Caco-2 (cell line): ENCODE measurements at regions of chr17 and their contacts with region 1.

Region 1: GRCh38 chr17:64145757-64146417 is 15.9 kb upstream of the ERN1 start:
- DNase-seq: peak; percentile 97 to 99
- H3K4me3 ChIP-seq: peak overlapping the region; percentile 81
- H3K4me3 Mint-ChIP-seq: no peak overlapping the region
- H3K27ac Mint-ChIP-seq: no peak overlapping the region
- H3K4me1 ChIP-seq: no peaks in the 10 kb centered on the region
- H3K4me1 Mint-ChIP-seq: peaks cover 20% of the 10 kb centered on the region
- H3K27me3 ChIP-seq: no peaks in the 10 kb centered on the region
- H3K27me3 Mint-ChIP-seq: no peaks in the 10 kb centered on the region
- CTCF ChIP-seq: no peak

Region 2: GRCh38 chr17:63735691-63736090 is 410.2 kb before region 1 on chr17:
- CTCF ChIA-PET with region 1: no interaction called
- POLR2A ChIA-PET with region 1: interaction called, 17 read pairs
- intact Hi-C with region 1: no loop called
- DNase-seq: no peak
- H3K4me3 ChIP-seq: no peak overlapping the region
- H3K4me3 Mint-ChIP-seq: no peak overlapping the region
- H3K27ac Mint-ChIP-seq: no peak overlapping the region
- H3K4me1 ChIP-seq: peaks cover 5% of the 10 kb centered on the region; the same call in 1 of the 2 replicates
- H3K4me1 Mint-ChIP-seq: peaks cover 6% of the 10 kb centered on the region
- H3K27me3 ChIP-seq: no peaks in the 10 kb centered on the region
- H3K27me3 Mint-ChIP-seq: no peaks in the 10 kb centered on the region
- CTCF ChIP-seq: no peak

Region 3: GRCh38 chr17:64187093-64187895 is 41.4 kb after region 1 on chr17:
- CTCF ChIA-PET with region 1: no interaction called
- POLR2A ChIA-PET with region 1: no interaction called
- intact Hi-C with region 1: loop called (anchors 1 kb)
- DNase-seq: peak; percentile 77 to 81
- H3K4me3 ChIP-seq: no peak overlapping the region
- H3K4me3 Mint-ChIP-seq: peak overlapping the region; percentile 28
- H3K27ac Mint-ChIP-seq: peak overlapping the region; percentile 86
- H3K4me1 ChIP-seq: peaks cover 25% of the 10 kb centered on the region
- H3K4me1 Mint-ChIP-seq: peaks cover 21% of the 10 kb centered on the region
- H3K27me3 ChIP-seq: no peaks in the 10 kb centered on the region
- H3K27me3 Mint-ChIP-seq: no peaks in the 10 kb centered on the region
- CTCF ChIP-seq: no peak

Region 4: DNA sequence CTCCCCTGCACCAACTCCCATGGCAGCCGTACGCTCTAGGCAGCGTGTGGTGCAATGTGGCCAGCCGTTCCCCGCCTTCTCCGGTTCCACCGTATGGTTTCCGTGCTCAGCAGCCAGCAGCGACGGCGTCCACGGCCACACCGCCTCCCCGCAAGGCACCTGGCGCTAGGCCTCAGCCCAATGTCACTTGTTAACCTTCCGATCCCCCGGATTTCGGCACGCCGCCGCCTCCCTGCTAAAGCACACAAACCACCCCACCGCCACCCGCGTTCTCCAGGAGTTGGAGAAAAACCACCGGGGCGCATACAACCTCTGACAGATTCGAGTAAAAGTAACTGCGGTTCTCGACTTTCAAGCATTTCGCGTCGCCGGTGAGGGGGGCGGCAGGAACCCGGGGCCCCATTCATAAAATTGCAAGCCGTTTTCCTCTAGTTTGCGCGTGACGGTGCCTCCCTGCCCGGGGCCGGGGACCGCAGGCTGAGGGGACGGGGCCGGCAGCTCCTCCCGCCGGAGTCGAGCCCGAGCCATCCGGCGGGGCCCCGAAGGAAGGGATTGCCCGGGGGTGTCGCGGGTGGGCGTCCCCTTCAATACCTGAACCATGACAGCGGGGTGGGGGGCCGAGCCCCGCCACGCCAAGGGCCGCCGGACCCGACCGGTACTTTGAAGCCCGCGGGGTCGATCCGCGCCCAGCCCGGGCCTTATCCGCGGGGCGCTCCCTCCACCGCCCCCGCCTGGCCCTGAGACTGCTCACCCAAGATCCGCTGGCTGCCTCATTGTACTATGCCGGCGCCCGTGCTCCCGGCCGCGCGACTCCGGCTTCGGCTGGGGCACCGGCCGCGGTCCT is 116.8 kb after region 1 on chr17 and contains the start of gene TEX2:
- CTCF ChIA-PET with region 1: no interaction called
- POLR2A ChIA-PET with region 1: interaction called, 4 read pairs
- intact Hi-C with region 1: loop called (anchors 5 kb)
- DNase-seq: peak; percentile 54 to 66
- H3K4me3 ChIP-seq: peak within 1 kb of the TSS; percentile 83
- H3K4me3 Mint-ChIP-seq: peak within 1 kb of the TSS; percentile 98
- H3K27ac Mint-ChIP-seq: peak within 1 kb of the TSS; percentile 53
- H3K4me1 ChIP-seq: peaks cover 15% of the 10 kb centered on the region
- H3K4me1 Mint-ChIP-seq: peaks cover 12% of the 10 kb centered on the region
- H3K27me3 ChIP-seq: no peaks in the 10 kb centered on the region
- H3K27me3 Mint-ChIP-seq: peaks cover 4% of the 10 kb centered on the region
- CTCF ChIP-seq: no peak
- total RNA-seq, gene TEX2: 19.3 and 20.2 TPM in 2 replicates

Region 5: DNA sequence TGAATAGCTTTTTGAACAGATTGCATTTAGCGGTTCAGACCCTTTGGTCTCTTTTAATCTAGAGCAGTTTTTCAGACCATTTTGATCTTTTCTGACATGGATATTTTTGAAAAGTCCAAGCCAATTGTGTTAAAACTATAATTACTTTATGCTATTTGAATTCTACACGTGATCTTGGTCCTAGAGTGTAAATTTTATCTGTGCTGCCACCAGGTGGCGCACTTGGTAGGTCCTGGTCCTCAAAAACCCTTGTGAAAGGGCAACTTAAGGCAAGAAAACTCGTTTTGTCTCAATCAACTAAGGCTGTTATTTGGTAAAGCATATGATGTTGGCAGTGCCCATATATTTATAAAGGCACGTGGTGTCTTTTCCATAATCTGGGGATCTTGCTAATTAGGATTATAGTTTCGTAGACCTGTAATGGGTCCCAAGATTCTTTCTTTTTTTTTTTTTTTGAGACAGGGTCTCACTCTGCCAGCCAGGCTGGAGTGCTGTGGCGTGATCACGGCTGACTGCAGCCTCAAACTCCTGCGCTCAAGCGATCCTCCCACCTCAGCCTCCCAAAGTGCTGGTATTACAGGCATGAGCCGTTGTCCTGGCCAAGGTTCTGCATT is 161.1 kb after region 1 on chr17:
- CTCF ChIA-PET with region 1: interaction called, 3 read pairs
- POLR2A ChIA-PET with region 1: interaction called, 12 read pairs
- intact Hi-C with region 1: no loop called
- DNase-seq: peak; percentile 72 to 77
- H3K4me3 ChIP-seq: no peak overlapping the region
- H3K4me3 Mint-ChIP-seq: no peak overlapping the region
- H3K27ac Mint-ChIP-seq: no peak overlapping the region
- H3K4me1 ChIP-seq: peaks cover 38% of the 10 kb centered on the region
- H3K4me1 Mint-ChIP-seq: peaks cover 22% of the 10 kb centered on the region
- H3K27me3 ChIP-seq: no peaks in the 10 kb centered on the region
- H3K27me3 Mint-ChIP-seq: no peaks in the 10 kb centered on the region
- CTCF ChIP-seq: peak; percentile 80 to 89